ENCODE measurements at regions of chr2 and their contacts with region 1.

Region 1: GRCh38 chr2:75608684-75609333 is 37.8 kb upstream of the MRPL19 start:
- DNase-seq: peak; percentile 65
- ATAC-seq: peak; percentile 82
- H3K4me3 ChIP-seq: no peak overlapping the region
- H3K4me3 Mint-ChIP-seq: no peak overlapping the region
- H3K27ac ChIP-seq: no peak overlapping the region
- H3K27ac Mint-ChIP-seq: no peak overlapping the region
- H3K4me1 ChIP-seq: peaks cover 4% of the 10 kb centered on the region in 2 donors
- H3K4me1 Mint-ChIP-seq: peaks cover 7% of the 10 kb centered on the region
- H3K27me3 ChIP-seq: peaks cover 0 to 40% (median 14%) of the 10 kb centered on the region in 4 experiments
- H3K27me3 Mint-ChIP-seq: peaks cover 60% of the 10 kb centered on the region
- CTCF ChIP-seq: peak; percentile 90

Region 2: GRCh38 chr2:74919827-74920226 is 689.0 kb before region 1 on chr2:
- CTCF ChIA-PET with region 1: interaction called, 16 read pairs
- POLR2A ChIA-PET with region 1: interaction called, 3 read pairs
- intact Hi-C with region 1: loop called (anchors 1 kb)
- DNase-seq: peak; percentile 79
- ATAC-seq: peak; percentile 88
- H3K4me3 ChIP-seq: peak overlapping the region in 1 of 5 experiments; percentile 21
- H3K4me3 Mint-ChIP-seq: peak overlapping the region; percentile 68
- H3K27ac ChIP-seq: no peak overlapping the region
- H3K27ac Mint-ChIP-seq: peak overlapping the region; percentile 15
- H3K4me1 ChIP-seq: peaks cover 3 to 7% of the 10 kb centered on the region in 2 donors
- H3K4me1 Mint-ChIP-seq: peaks cover 27% of the 10 kb centered on the region
- H3K27me3 ChIP-seq: peaks cover 0 to 6% (median 0%) of the 10 kb centered on the region in 4 experiments
- H3K27me3 Mint-ChIP-seq: peaks cover 18% of the 10 kb centered on the region
- CTCF ChIP-seq: peak; percentile 96

Region 3: GRCh38 chr2:74975016-74975415 is 633.8 kb before region 1 on chr2:
- CTCF ChIA-PET with region 1: no interaction called
- POLR2A ChIA-PET with region 1: no interaction called
- intact Hi-C with region 1: no loop called
- DNase-seq: no peak
- ATAC-seq: no peak
- H3K4me3 ChIP-seq: no peak overlapping the region
- H3K4me3 Mint-ChIP-seq: no peak overlapping the region
- H3K27ac ChIP-seq: no peak overlapping the region
- H3K27ac Mint-ChIP-seq: no peak overlapping the region
- H3K4me1 ChIP-seq: peaks cover 6 to 7% of the 10 kb centered on the region in 2 donors
- H3K4me1 Mint-ChIP-seq: peaks cover 10% of the 10 kb centered on the region
- H3K27me3 ChIP-seq: no peaks in the 10 kb centered on the region
- H3K27me3 Mint-ChIP-seq: no peaks in the 10 kb centered on the region
- CTCF ChIP-seq: no peak

Region 4: DNA sequence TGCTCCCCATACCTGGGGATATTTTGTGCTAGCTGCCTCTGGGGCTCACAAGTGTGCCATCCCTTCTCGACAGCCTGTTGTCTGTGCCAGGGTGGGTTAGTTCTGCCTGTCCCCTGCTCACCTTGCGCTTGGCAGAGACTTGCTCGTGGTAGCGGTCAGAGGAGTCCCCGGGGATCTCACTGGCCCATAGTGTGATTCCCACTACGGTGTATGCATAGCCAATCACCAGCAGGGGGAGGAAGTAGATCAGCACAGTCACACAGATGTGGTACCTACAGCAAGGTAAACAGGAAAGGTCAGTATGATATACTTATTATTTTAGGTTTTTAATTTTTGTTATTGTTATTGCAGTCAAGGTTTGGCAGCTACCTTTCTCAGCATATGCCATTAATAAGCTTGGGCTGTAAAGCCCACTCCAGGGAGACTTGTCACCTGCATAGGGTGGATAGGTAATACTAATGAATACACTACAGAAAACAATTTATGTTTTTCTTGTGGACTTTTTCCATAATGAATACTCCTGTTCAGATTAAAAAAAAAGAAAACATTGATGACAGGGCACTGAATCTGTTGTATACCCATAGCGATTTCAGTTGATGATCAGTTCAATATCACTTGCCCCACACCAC is 555.2 kb before region 1 on chr2:
- CTCF ChIA-PET with region 1: interaction called, 7 read pairs
- POLR2A ChIA-PET with region 1: no interaction called
- intact Hi-C with region 1: loop called (anchors 5 kb)
- DNase-seq: peak; percentile 27
- ATAC-seq: peak; percentile 45
- H3K4me3 ChIP-seq: no peak overlapping the region
- H3K4me3 Mint-ChIP-seq: no peak overlapping the region
- H3K27ac ChIP-seq: no peak overlapping the region
- H3K27ac Mint-ChIP-seq: no peak overlapping the region
- H3K4me1 ChIP-seq: no peaks in the 10 kb centered on the region
- H3K4me1 Mint-ChIP-seq: no peaks in the 10 kb centered on the region
- H3K27me3 ChIP-seq: no peaks in the 10 kb centered on the region
- H3K27me3 Mint-ChIP-seq: no peaks in the 10 kb centered on the region
- CTCF ChIP-seq: peak; percentile 65

Region 5: GRCh38 chr2:75064691-75065396 is 544.0 kb before region 1 on chr2:
- CTCF ChIA-PET with region 1: interaction called, 6 read pairs
- POLR2A ChIA-PET with region 1: no interaction called
- intact Hi-C with region 1: loop called (anchors 1 kb)
- DNase-seq: peak; percentile 65
- ATAC-seq: peak; percentile 62
- H3K4me3 ChIP-seq: no peak overlapping the region
- H3K4me3 Mint-ChIP-seq: no peak overlapping the region
- H3K27ac ChIP-seq: no peak overlapping the region
- H3K27ac Mint-ChIP-seq: no peak overlapping the region
- H3K4me1 ChIP-seq: no peaks in the 10 kb centered on the region
- H3K4me1 Mint-ChIP-seq: no peaks in the 10 kb centered on the region
- H3K27me3 ChIP-seq: no peaks in the 10 kb centered on the region
- H3K27me3 Mint-ChIP-seq: no peaks in the 10 kb centered on the region
- CTCF ChIP-seq: peak; percentile 95

Region 6: DNA sequence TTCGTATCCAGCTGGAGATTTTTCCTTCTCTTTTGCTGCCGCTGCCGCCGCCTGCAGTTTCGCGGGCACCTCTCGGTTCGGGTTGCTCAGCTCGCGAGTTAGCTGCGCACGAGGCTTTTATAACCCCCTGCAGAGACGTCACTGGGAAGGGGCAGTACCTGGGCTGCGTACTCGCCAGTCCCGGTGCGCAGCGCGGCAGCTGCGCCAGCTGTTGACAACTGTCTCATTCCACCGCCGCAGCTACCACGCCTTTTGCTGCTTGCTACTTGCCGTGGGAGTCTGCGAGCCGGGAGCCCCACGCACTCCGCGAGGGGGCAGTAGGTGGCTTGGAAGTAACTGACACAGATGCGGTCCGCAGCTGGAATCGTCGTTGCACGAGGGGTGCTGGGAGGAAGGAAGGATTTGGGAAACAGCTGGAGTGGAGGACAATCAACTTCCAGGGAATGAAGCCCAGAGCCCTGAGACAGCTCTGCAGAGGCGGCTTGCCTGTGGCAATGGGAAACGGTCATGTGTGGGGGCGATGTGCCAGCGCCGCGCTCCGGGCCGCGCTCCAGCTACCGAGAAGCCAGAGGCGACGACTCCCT is 409.3 kb before region 1 on chr2 and contains the start of gene TACR1:
- CTCF ChIA-PET with region 1: interaction called, 5 read pairs
- POLR2A ChIA-PET with region 1: no interaction called
- intact Hi-C with region 1: loop called (anchors 10 kb)
- DNase-seq: peak; percentile 70
- ATAC-seq: peak; percentile 71
- H3K4me3 ChIP-seq: peak within 1 kb of the TSS in 4 of 5 experiments; percentile 9 to 49 (median 36)
- H3K4me3 Mint-ChIP-seq: peak within 1 kb of the TSS; percentile 91
- H3K27ac ChIP-seq: no peak within 1 kb of the TSS
- H3K27ac Mint-ChIP-seq: no peak within 1 kb of the TSS
- H3K4me1 ChIP-seq: peaks cover 22 to 23% of the 10 kb centered on the region in 2 donors
- H3K4me1 Mint-ChIP-seq: peaks cover 23% of the 10 kb centered on the region
- H3K27me3 ChIP-seq: peaks cover 0 to 41% (median 31%) of the 10 kb centered on the region in 4 experiments
- H3K27me3 Mint-ChIP-seq: peaks cover 57% of the 10 kb centered on the region
- CTCF ChIP-seq: peak; percentile 65
- total RNA-seq, gene TACR1: 0.05 TPM in 1 of 2 replicates, not detected in the other

Region 7: GRCh38 chr2:75592028-75592427 is 16.8 kb before region 1 on chr2:
- CTCF ChIA-PET with region 1: interaction called, 10 read pairs
- POLR2A ChIA-PET with region 1: no interaction called
- intact Hi-C with region 1: no loop called
- DNase-seq: no peak
- ATAC-seq: no peak
- H3K4me3 ChIP-seq: no peak overlapping the region
- H3K4me3 Mint-ChIP-seq: no peak overlapping the region
- H3K27ac ChIP-seq: no peak overlapping the region
- H3K27ac Mint-ChIP-seq: no peak overlapping the region
- H3K4me1 ChIP-seq: no peaks in the 10 kb centered on the region
- H3K4me1 Mint-ChIP-seq: no peaks in the 10 kb centered on the region
- H3K27me3 ChIP-seq: no peaks in the 10 kb centered on the region
- H3K27me3 Mint-ChIP-seq: peaks cover 16% of the 10 kb centered on the region
- CTCF ChIP-seq: no peak

Region 8: GRCh38 chr2:75619956-75620740 is 11.3 kb after region 1 on chr2:
- CTCF ChIA-PET with region 1: interaction called, 13 read pairs
- POLR2A ChIA-PET with region 1: no interaction called
- intact Hi-C with region 1: no loop called
- DNase-seq: no peak
- ATAC-seq: no peak
- H3K4me3 ChIP-seq: no peak overlapping the region
- H3K4me3 Mint-ChIP-seq: no peak overlapping the region
- H3K27ac ChIP-seq: no peak overlapping the region
- H3K27ac Mint-ChIP-seq: no peak overlapping the region
- H3K4me1 ChIP-seq: no peaks in the 10 kb centered on the region
- H3K4me1 Mint-ChIP-seq: no peaks in the 10 kb centered on the region
- H3K27me3 ChIP-seq: peaks cover 0 to 15% (median 0%) of the 10 kb centered on the region in 4 experiments
- H3K27me3 Mint-ChIP-seq: peaks cover 29% of the 10 kb centered on the region
- CTCF ChIP-seq: no peak

Region 9: GRCh38 chr2:75729861-75730260 is 121.1 kb after region 1 on chr2:
- CTCF ChIA-PET with region 1: no interaction called
- POLR2A ChIA-PET with region 1: no interaction called
- intact Hi-C with region 1: no loop called
- DNase-seq: no peak
- ATAC-seq: no peak
- H3K4me3 ChIP-seq: no peak overlapping the region
- H3K4me3 Mint-ChIP-seq: no peak overlapping the region
- H3K27ac ChIP-seq: no peak overlapping the region
- H3K27ac Mint-ChIP-seq: no peak overlapping the region
- H3K4me1 ChIP-seq: no peaks in the 10 kb centered on the region
- H3K4me1 Mint-ChIP-seq: no peaks in the 10 kb centered on the region
- H3K27me3 ChIP-seq: peaks cover 0 to 10% (median 0%) of the 10 kb centered on the region in 4 experiments
- H3K27me3 Mint-ChIP-seq: peaks cover 23% of the 10 kb centered on the region
- CTCF ChIP-seq: no peak

Region 10: DNA sequence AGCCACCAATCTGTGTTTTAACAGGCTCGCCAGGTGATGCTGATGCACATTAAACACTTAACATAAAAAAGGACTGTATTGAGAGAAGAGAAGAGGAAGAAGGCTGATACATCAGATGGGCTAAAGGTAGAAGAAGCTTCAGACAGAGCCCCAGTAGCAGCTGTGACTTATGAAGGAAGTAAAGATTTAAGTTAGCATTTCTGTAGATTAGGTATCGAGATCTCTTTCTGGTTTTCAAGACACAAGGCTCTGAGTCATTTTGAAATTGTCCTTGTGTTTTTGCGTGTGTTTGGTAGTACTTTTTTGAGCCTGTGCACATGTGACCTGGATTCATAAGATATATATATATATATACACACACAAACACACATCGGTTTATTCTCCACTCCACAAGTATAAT is 142.6 kb after region 1 on chr2:
- CTCF ChIA-PET with region 1: no interaction called
- POLR2A ChIA-PET with region 1: no interaction called
- intact Hi-C with region 1: no loop called
- DNase-seq: no peak
- ATAC-seq: no peak
- H3K4me3 ChIP-seq: no peak overlapping the region
- H3K4me3 Mint-ChIP-seq: no peak overlapping the region
- H3K27ac ChIP-seq: no peak overlapping the region
- H3K27ac Mint-ChIP-seq: no peak overlapping the region
- H3K4me1 ChIP-seq: no peaks in the 10 kb centered on the region
- H3K4me1 Mint-ChIP-seq: no peaks in the 10 kb centered on the region
- H3K27me3 ChIP-seq: peaks cover 0 to 3% (median 0%) of the 10 kb centered on the region in 4 experiments
- H3K27me3 Mint-ChIP-seq: peaks cover 13% of the 10 kb centered on the region
- CTCF ChIP-seq: no peak